ENCODE measurements at regions of chr17 and their contacts with region 1.

Region 1: GRCh38 chr17:7614422-7615264 is at the start of gene FXR2:
- DNase-seq: peak; percentile 99
- H3K4me3 Mint-ChIP-seq: peak within 1 kb of the TSS; percentile 85
- H3K27ac Mint-ChIP-seq: peak within 1 kb of the TSS; percentile 89
- H3K4me1 Mint-ChIP-seq: peaks cover 39% of the 10 kb centered on the region
- H3K27me3 Mint-ChIP-seq: no peaks in the 10 kb centered on the region
- total RNA-seq, gene FXR2: 59.5 and 63.6 TPM in 2 replicates

Region 2: GRCh38 chr17:7219812-7220581 is 394.6 kb before region 1 on chr17 and contains the starts of genes ACADVL and DLG4:
- intact Hi-C with region 1: no loop called
- DNase-seq: peak; percentile 74
- H3K4me3 Mint-ChIP-seq: peak within 1 kb of the TSS; percentile 96
- H3K27ac Mint-ChIP-seq: peak within 1 kb of the TSS; percentile 96
- H3K4me1 Mint-ChIP-seq: peaks cover 54% of the 10 kb centered on the region
- H3K27me3 Mint-ChIP-seq: peaks cover 2% of the 10 kb centered on the region
- total RNA-seq, gene ACADVL: 287 and 294 TPM in 2 replicates
- total RNA-seq, gene DLG4: 15.3 and 15.5 TPM in 2 replicates

Region 3: DNA sequence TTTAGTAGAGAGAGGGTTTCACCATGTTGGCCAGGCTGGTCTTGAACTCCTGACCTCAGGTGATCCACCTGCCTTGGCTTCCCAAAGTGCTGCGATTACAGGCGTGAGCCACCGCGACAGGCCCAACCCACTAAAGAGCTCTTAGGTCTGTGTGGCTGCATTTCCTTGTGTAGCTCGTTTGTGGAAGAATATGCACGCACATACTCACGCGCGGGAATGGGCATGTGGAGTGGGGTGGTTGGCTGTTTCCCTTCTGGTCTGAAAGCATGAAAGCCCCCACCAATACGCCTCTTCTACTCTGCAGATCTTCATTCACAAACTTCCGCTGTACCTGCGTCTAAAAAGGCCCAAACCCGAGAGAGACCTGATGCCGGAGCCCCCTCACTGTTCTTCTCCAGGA is 159.7 kb before region 1 on chr17:
- intact Hi-C with region 1: loop called (anchors 1 kb)
- DNase-seq: no peak
- H3K4me3 Mint-ChIP-seq: peak overlapping the region; percentile 87
- H3K27ac Mint-ChIP-seq: peak overlapping the region; percentile 88
- H3K4me1 Mint-ChIP-seq: peaks cover 31% of the 10 kb centered on the region
- H3K27me3 Mint-ChIP-seq: no peaks in the 10 kb centered on the region

Region 4: GRCh38 chr17:7583253-7584109 is 31.2 kb before region 1 on chr17 and contains the start of gene MPDU1:
- intact Hi-C with region 1: loop called (anchors 1 kb)
- DNase-seq: peak; percentile 95
- H3K4me3 Mint-ChIP-seq: peak within 1 kb of the TSS; percentile 98
- H3K27ac Mint-ChIP-seq: peak within 1 kb of the TSS; percentile 100
- H3K4me1 Mint-ChIP-seq: peaks cover 54% of the 10 kb centered on the region
- H3K27me3 Mint-ChIP-seq: no peaks in the 10 kb centered on the region
- total RNA-seq, gene MPDU1: 108 and 111 TPM in 2 replicates

Region 5: DNA sequence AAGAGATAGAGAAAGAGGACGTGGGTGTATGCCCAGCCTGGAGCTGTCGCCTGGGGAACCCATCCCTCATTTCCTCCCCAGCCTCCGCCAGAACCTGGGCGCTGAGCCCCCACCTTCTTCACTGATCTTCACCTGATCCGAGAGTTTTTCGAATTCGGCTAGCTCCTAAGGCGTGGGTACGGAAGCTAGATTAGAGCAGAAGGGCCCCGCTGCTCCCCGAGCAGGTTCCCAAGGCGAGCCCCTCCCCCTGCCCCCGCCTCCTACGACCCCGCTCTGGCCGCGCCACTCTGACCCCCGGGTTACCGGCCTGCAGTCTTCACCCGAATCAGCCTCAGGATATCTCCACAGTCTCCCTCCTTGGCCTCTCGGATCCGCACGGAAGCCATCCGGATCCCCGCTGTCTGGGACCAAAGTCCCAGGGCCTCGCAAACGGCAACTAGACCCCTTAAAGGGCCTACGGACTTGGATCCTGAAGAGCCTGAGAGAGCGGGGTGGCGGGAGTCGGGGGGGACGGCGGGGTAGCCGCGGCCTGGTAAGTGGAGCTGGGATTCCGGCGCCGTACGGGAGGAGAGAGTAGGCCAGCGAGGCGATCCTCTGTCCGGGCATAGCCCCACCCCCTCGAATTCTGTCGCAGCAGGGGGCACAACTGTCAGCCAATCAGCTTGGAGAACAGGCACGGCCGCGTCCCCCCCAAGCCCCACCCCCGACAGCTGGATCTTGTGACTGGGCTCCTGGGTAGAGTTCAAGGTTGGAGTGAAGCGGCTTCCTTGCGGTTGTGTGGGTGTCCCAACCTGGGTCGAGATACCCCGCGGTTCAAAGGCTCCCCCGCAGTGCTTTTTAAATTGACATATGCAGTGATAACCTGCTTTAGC is 12.8 kb after region 1 on chr17 and contains the start of gene SAT2:
- intact Hi-C with region 1: loop called (anchors 1 kb)
- DNase-seq: peak; percentile 77
- H3K4me3 Mint-ChIP-seq: peak within 1 kb of the TSS; percentile 89
- H3K27ac Mint-ChIP-seq: peak within 1 kb of the TSS; percentile 77
- H3K4me1 Mint-ChIP-seq: peaks cover 18% of the 10 kb centered on the region
- H3K27me3 Mint-ChIP-seq: no peaks in the 10 kb centered on the region
- total RNA-seq, gene SAT2: 23.8 and 24.0 TPM in 2 replicates

Region 6: GRCh38 chr17:7650509-7651096 is 36.0 kb after region 1 on chr17 and contains the start of gene ATP1B2:
- intact Hi-C with region 1: loop called (anchors 1 kb)
- DNase-seq: peak; percentile 60
- H3K4me3 Mint-ChIP-seq: peak within 1 kb of the TSS; percentile 84
- H3K27ac Mint-ChIP-seq: no peak within 1 kb of the TSS
- H3K4me1 Mint-ChIP-seq: peaks cover 11% of the 10 kb centered on the region
- H3K27me3 Mint-ChIP-seq: peaks cover 53% of the 10 kb centered on the region
- total RNA-seq, gene ATP1B2: 0.54 TPM in 2 replicates

Region 7: GRCh38 chr17:7716901-7717755 is 102.5 kb after region 1 on chr17 and contains the start of gene DNAH2:
- intact Hi-C with region 1: no loop called
- DNase-seq: peak; percentile 16
- H3K4me3 Mint-ChIP-seq: peak within 1 kb of the TSS; percentile 77
- H3K27ac Mint-ChIP-seq: no peak within 1 kb of the TSS
- H3K4me1 Mint-ChIP-seq: peaks cover 19% of the 10 kb centered on the region
- H3K27me3 Mint-ChIP-seq: peaks cover 72% of the 10 kb centered on the region
- total RNA-seq, gene DNAH2: not detected in 2 replicates

Region 8: DNA sequence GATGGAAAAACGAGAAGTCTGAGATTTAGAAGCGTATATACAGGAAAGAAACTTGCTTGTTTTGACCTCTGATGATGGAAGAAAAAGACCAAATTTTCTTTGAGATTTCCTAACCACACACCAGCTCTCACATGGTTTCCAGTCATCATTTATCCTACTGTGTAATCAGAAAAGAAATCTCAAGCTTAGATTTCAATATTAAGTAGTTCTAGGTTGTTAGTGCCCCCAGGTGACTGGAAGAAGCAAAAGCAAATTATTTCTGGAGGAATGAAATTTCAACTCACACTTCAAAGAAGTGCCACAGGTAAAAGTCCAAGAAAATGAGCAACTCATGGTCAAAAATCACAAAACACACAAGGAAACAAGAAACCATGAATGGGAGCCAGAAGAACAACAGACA is 167.6 kb after region 1 on chr17:
- intact Hi-C with region 1: no loop called
- DNase-seq: no peak
- H3K4me3 Mint-ChIP-seq: no peak overlapping the region
- H3K27ac Mint-ChIP-seq: no peak overlapping the region
- H3K4me1 Mint-ChIP-seq: no peaks in the 10 kb centered on the region
- H3K27me3 Mint-ChIP-seq: peaks cover 12% of the 10 kb centered on the region